ENCODE measurements at regions of chr1 and their contacts with region 1.

Region 1: GRCh38 chr1:155084722-155085503 is 6.3 kb downstream of the EFNA3 start:
- DNase-seq: peak; percentile 96
- ATAC-seq: peak; percentile 91

Region 2: GRCh38 chr1:154925335-154926170 is 159.4 kb before region 1 on chr1:
- intact Hi-C with region 1: no loop called
- DNase-seq: no peak
- ATAC-seq: no peak

Region 3: DNA sequence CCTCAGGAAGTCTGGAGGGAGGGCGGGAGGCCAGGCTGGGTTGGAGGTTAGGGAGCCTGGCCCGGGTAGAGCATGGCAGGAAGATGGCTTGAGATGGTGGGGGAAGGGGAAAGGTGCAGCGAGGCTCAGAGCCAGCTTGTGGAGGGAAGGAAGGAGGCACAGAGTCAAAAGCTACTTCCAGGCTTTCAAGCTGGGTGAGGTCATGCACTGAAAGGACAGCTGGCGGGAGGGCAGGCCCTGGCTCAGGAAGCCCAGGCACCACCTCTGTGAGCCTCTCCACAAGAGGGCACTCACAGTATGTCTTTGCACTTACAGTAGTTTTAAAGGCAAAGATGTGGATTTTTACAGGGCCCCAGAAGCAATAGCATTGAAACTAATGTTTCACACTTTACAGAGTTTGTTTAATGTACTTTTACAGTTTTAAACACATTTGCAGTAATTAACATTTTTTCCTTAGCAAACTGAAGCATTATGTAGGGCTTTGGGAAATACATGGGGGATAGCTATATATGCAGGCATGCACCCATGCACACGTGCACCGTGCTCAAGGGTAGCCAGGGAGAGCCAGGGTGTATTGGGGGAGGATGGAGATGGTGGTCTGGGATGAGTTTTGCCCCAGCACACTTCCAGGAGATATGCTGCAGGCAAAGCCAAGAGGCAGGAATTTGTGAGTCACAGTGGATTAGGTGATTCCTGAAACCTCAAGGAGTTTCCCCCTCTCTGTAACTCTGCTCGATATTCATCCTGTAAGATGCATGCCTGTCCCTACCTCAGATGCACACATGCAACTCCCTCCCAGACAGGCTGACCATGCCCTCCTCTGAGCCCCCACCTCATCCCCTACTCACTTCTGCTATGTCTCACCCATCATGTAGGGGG is 39.9 kb before region 1 on chr1:
- intact Hi-C with region 1: loop called (anchors 2 kb)
- DNase-seq: peak; percentile 85
- ATAC-seq: peak; percentile 93

Region 4: DNA sequence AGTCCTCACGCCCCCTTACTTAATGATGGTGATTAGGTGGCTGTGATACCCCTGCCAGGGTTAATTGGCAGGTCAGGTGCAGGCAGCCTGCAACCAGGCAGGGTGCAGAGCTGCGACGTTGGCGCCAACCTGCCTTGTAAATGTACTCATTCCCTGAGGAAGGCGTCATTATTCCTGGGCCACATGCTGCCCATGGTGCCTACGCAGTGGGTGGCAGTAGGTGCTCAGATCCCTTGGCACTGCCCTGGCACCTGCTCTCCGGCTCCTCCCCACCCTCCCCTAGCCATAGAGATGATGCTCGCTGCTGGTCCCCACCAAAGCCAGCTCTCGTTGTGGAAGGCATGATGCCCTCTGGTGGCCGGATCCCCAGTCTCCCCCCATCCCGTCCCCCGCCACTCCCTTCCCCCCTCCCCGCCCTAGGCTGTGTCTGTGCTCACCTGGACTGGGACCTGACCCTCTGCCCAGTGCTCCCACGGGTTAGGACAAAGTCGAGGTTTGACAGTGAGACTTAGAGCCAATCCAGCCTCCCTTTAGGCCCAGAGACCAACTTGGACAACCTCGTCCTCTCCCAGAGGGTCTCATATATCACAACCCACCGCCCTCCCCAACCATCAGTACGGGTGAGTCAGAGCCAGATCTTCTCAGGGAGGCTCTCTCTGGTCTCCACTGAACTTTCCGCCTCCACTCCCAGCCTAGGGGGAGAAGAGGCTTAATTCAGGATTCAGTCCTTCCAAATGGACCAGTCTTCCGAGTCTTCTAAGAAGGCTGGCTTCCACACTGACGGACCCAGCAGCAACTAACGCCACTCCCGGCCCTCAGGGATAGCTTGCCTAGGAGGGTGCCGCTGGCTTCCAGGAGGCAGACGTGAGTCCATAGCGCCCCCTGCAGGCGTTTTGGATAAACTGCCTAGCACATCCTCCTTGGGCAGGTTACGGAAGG is 82.5 kb after region 1 on chr1:
- intact Hi-C with region 1: loop called (anchors 2 kb)
- DNase-seq: peak; percentile 92
- ATAC-seq: peak; percentile 80

Measured in left ventricle myocardium superior (tissue), 1 donor.